Activated B cell treated with CpG ODN at 0.5 μM for 24 hours (primary cell): ENCODE measurements at regions of chr9 and their contacts with region 1.

Region 1: DNA sequence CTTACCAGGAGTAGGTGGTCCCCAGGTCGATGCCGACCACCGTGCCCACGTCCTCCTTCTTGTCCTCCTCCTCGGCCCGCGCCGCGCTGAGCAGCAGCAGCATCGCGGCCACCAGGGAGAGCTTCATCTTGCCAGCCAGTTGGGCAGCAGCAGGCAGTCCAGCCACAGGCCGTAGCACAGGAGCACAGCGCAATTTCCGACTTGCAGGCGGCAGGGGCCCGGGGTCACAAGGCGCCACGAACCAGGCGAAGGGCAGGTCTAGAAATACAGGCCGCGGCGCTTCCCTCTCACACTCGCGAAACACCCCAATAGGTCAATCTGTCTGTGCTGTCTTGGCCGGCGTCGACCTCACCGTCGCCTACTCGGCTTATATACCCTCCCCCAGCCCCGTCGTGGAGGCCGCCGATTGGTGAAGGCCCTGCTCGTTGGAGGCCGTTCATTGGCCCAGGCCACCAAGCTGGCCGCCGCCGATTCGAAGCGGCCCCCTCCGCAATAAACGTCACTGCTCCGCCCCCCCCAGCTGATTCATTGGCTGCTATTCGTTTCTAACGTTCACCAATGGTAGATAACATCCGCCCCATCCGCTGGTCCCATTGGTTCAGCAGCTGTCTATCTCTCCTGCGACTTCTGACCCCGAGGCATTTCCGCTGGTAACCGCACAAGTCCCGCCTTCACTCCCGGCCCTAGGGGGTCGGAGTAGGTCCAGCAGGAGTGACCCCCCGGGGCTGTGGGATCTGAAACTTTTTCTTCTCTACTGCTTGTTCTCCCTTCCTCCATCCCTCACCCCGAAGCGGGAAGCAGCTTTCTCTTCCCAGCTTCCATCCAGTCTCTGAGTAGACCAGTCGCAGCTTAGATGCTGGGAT is at the start of gene HSPA5:
- DNase-seq: peak; percentile 94
- ATAC-seq: peak; percentile 88
- H3K4me3 Mint-ChIP-seq: peak within 1 kb of the TSS; percentile 94
- H3K27ac Mint-ChIP-seq: peak within 1 kb of the TSS; percentile 98
- H3K4me1 Mint-ChIP-seq: peaks cover 54% of the 10 kb centered on the region
- H3K27me3 Mint-ChIP-seq: no peaks in the 10 kb centered on the region
- CTCF ChIP-seq: no peak
- total RNA-seq, gene HSPA5: 118 and 119 TPM in 2 replicates

Region 2: GRCh38 chr9:124868511-124869465 is 372.4 kb before region 1 on chr9:
- CTCF ChIA-PET with region 1: no interaction called
- POLR2A ChIA-PET with region 1: interaction called, 11 read pairs
- intact Hi-C with region 1: loop called (anchors 5 kb)
- DNase-seq: peak; percentile 97
- ATAC-seq: peak; percentile 69
- H3K4me3 Mint-ChIP-seq: peak overlapping the region; percentile 91
- H3K27ac Mint-ChIP-seq: peak overlapping the region; percentile 97
- H3K4me1 Mint-ChIP-seq: peaks cover 54% of the 10 kb centered on the region
- H3K27me3 Mint-ChIP-seq: no peaks in the 10 kb centered on the region
- CTCF ChIP-seq: no peak

Region 3: GRCh38 chr9:125008599-125008998 is 232.6 kb before region 1 on chr9:
- CTCF ChIA-PET with region 1: no interaction called
- POLR2A ChIA-PET with region 1: no interaction called
- intact Hi-C with region 1: no loop called
- DNase-seq: no peak
- ATAC-seq: no peak
- H3K4me3 Mint-ChIP-seq: no peak overlapping the region
- H3K27ac Mint-ChIP-seq: no peak overlapping the region
- H3K4me1 Mint-ChIP-seq: no peaks in the 10 kb centered on the region
- H3K27me3 Mint-ChIP-seq: no peaks in the 10 kb centered on the region
- CTCF ChIP-seq: no peak

Region 4: GRCh38 chr9:125143375-125144090 is 97.7 kb before region 1 on chr9 and contains the start of gene SCAI:
- CTCF ChIA-PET with region 1: no interaction called
- POLR2A ChIA-PET with region 1: interaction called, 3 read pairs
- intact Hi-C with region 1: loop called (anchors 1 kb)
- DNase-seq: peak; percentile 90
- ATAC-seq: peak; percentile 99
- H3K4me3 Mint-ChIP-seq: peak within 1 kb of the TSS; percentile 92
- H3K27ac Mint-ChIP-seq: peak within 1 kb of the TSS; percentile 36
- H3K4me1 Mint-ChIP-seq: peaks cover 22% of the 10 kb centered on the region
- H3K27me3 Mint-ChIP-seq: no peaks in the 10 kb centered on the region
- CTCF ChIP-seq: peak; percentile 91
- total RNA-seq, gene SCAI: 10.7 and 11.7 TPM in 2 replicates

Region 5: GRCh38 chr9:125189361-125190289 is 51.6 kb before region 1 on chr9 and contains the start of gene PPP6C:
- CTCF ChIA-PET with region 1: no interaction called
- POLR2A ChIA-PET with region 1: interaction called, 25 read pairs
- intact Hi-C with region 1: loop called (anchors 1 kb)
- DNase-seq: peak; percentile 93
- ATAC-seq: peak; percentile 98
- H3K4me3 Mint-ChIP-seq: peak within 1 kb of the TSS; percentile 97
- H3K27ac Mint-ChIP-seq: peak within 1 kb of the TSS; percentile 91
- H3K4me1 Mint-ChIP-seq: peaks cover 44% of the 10 kb centered on the region
- H3K27me3 Mint-ChIP-seq: no peaks in the 10 kb centered on the region
- CTCF ChIP-seq: no peak
- total RNA-seq, gene PPP6C: 41.2 and 47.0 TPM in 2 replicates

Region 6: GRCh38 chr9:125255781-125256391 is 14.7 kb after region 1 on chr9:
- CTCF ChIA-PET with region 1: interaction called, 9 read pairs
- POLR2A ChIA-PET with region 1: interaction called, 201 read pairs
- intact Hi-C with region 1: loop called (anchors 1 kb)
- DNase-seq: no peak
- ATAC-seq: no peak
- H3K4me3 Mint-ChIP-seq: no peak overlapping the region
- H3K27ac Mint-ChIP-seq: no peak overlapping the region
- H3K4me1 Mint-ChIP-seq: peaks cover 9% of the 10 kb centered on the region
- H3K27me3 Mint-ChIP-seq: peaks cover 2% of the 10 kb centered on the region
- CTCF ChIP-seq: no peak

Region 7: DNA sequence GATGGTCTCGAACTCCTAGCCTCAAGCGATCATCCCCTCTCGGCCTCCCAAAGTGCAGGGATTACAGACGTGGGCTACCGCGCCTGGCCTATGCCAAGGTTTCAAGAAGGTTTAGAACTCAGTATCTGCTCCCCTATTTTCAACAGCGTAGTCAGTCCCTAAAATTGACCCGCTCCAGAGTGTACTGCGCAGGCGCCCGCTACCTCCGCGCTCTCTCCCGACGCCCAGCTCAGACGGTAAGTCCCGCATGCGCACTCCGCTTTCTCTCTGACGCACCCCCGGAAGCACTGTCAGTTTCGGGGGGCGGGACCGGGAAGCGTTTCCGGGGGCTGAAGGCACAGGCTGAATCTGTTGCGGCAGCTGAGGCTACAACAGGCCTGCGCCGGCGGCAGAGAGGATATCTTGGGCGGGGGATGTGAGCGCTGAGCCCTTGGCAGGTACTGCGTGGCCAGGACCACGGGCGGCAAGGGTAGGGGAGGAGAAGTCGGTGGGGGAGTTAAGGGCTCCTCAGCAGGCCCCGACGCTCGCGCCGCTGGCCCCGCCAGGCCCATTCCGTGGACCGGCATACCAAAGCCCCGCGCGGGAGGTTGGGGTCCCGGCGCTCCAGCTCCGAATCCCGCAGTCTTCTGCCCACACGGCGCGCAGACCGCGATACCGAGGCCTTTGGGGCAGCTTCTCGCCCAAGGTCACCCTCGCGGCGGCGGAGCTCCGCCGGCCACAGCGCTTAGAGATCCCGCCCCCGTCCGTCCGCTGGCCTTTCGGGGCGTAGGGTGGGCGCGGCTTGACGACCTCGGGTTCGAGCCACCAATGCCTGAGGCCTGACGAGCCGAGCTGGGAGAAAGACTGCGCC is 1563.7 kb after region 1 on chr9 and contains the start of gene ZBTB43:
- CTCF ChIA-PET with region 1: no interaction called
- POLR2A ChIA-PET with region 1: interaction called, 4 read pairs
- intact Hi-C with region 1: loop called (anchors 10 kb)
- DNase-seq: peak; percentile 97
- ATAC-seq: peak; percentile 82
- H3K4me3 Mint-ChIP-seq: peak within 1 kb of the TSS; percentile 92
- H3K27ac Mint-ChIP-seq: peak within 1 kb of the TSS; percentile 96
- H3K4me1 Mint-ChIP-seq: peaks cover 31% of the 10 kb centered on the region
- H3K27me3 Mint-ChIP-seq: no peaks in the 10 kb centered on the region
- CTCF ChIP-seq: no peak
- total RNA-seq, gene ZBTB43: 20.3 and 22.8 TPM in 2 replicates